Esophagus squamous epithelium (tissue), 5 donors: ENCODE measurements at regions of chr2 and their contacts with region 1.

Region 1: GRCh38 chr2:88669371-88670214 is 21.9 kb upstream of the RPIA start:
- DNase-seq: no peak
- H3K4me3 ChIP-seq: no peak overlapping the region
- H3K27ac ChIP-seq: peak overlapping the region in 1 of 4 donors; percentile 26
- H3K4me1 ChIP-seq: peaks cover 0 to 5% (median 0%) of the 10 kb centered on the region in 3 donors
- H3K27me3 ChIP-seq: no peaks in the 10 kb centered on the region
- CTCF ChIP-seq: peak; percentile 47 to 76 (median 64)
- POLR2A ChIP-seq: no peak

Region 2: DNA sequence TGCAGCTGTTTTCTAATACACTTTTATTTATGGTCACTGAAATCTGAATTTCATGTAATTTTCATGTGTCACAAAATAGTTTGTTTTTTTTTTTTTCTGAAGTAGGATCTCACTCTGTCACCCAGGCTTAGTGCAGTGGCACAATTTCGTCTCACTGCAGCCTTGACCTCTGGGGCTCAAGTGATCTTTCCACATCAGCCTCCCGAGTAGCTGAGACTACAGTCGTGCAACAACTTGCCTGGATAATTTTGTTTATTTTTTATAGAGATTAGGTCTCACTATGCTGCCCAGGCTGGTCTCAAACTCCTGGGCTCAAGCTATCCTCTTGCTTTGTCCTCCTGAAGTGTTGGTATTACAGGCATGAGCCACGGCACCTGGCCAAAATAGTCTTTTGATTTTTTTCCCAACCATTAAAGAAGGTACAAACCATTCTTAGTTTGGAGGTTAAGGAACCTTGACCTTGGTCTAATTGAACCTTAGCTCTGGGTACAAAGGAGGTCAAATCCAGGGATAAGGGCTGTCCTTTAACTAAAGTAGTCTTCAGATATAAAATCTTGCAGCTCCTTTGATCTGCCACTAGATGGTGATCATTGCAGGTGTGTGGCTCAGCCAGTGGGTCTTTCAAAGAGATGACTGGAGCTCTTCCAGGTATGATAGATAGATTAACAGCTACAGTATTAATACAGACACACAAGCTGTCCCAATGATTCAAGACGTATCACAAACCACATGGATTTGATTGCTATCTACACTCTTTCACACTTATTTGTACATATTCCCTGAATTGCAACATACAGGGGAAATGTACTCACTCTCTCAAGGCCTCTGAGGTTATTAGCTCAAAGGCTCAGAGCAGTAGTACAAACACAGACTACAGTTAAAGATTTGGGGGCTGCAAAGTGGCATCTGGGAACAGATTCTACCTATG is 609.4 kb before region 1 on chr2:
- intact Hi-C with region 1: no loop called
- DNase-seq: no peak
- H3K4me3 ChIP-seq: no peak overlapping the region
- H3K27ac ChIP-seq: no peak overlapping the region
- H3K4me1 ChIP-seq: peaks cover 5 to 14% (median 7%) of the 10 kb centered on the region in 3 donors
- H3K27me3 ChIP-seq: no peaks in the 10 kb centered on the region
- CTCF ChIP-seq: peak; percentile 57 to 80 (median 66)
- POLR2A ChIP-seq: no peak

Region 3: DNA sequence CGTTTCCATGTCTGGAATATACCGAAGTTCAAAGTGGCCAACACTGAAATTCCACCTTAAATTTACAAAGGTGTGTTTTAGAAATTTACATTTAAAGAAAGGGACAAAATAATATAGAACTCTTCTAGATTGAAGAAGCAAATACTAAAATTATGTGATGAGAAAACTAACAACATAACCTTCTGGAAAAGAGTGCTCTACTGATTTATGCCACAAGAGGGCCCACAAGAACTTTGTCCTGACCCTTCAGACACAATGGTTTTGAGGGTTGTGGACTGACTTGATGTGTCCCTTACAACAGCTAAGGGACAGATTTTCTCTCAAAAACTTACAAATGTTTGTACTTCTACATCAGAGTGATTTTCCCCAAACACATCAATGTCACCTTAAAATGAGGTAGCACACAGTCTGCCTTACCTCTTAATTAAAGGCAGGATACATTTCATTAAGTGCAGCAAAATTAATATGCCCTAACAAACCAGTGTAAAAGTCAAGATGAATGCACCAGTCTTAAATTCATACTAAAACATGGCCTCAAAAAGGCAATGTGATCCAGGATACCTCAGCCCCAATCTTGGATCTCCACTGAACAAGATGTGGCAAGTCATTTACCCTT is 78.5 kb before region 1 on chr2:
- intact Hi-C with region 1: loop called (anchors 5 kb)
- DNase-seq: no peak
- H3K4me3 ChIP-seq: no peak overlapping the region
- H3K27ac ChIP-seq: no peak overlapping the region
- H3K4me1 ChIP-seq: no peaks in the 10 kb centered on the region
- H3K27me3 ChIP-seq: no peaks in the 10 kb centered on the region
- CTCF ChIP-seq: peak; percentile 72 to 85 (median 80)
- POLR2A ChIP-seq: no peak

Region 4: DNA sequence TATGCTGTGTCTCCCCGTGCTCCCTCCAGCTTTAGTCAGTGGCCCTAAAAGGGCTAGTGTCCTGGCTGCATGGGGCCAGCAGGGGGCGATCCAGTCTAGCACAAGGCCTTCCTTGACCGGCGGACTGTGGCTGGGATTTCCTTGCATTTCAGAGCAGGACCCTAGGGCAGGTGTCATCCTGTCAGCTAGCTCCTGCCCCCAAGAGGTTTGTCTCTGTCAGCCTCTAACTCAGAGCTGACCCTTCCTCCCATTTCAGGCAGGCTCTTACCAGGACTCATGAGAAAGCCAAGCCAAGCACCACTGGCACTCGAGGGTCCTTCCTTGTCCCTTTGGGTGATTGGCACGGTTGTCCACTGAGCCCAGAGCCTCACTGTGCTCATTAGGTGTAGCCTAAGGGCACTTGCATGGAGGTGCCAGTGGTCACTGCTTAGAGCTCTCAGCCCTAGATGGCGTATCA is 162.2 kb after region 1 on chr2:
- intact Hi-C with region 1: no loop called
- DNase-seq: no peak
- H3K4me3 ChIP-seq: no peak overlapping the region
- H3K27ac ChIP-seq: no peak overlapping the region
- H3K4me1 ChIP-seq: peaks cover 0 to 18% (median 0%) of the 10 kb centered on the region in 3 donors
- H3K27me3 ChIP-seq: peaks cover 0 to 14% (median 0%) of the 10 kb centered on the region in 4 donors
- CTCF ChIP-seq: peak; percentile 35 to 66 (median 48)
- POLR2A ChIP-seq: no peak